Endothelial cell of umbilical vein (primary cell): ENCODE measurements at regions of chr12 and their contacts with region 1.

Region 1: GRCh38 chr12:91577586-91578539 is 395.2 kb upstream of the DCN start:
- DNase-seq: peak; percentile 61
- H3K4me3 ChIP-seq: peak overlapping the region in 1 of 3 experiments; percentile 73
- H3K27ac ChIP-seq: no peak overlapping the region
- H3K4me1 ChIP-seq: peaks cover 4% of the 10 kb centered on the region
- H3K27me3 ChIP-seq: no peaks in the 10 kb centered on the region
- CTCF ChIP-seq: peak; percentile 20 to 21
- POLR2A ChIP-seq: no peak

Region 2: DNA sequence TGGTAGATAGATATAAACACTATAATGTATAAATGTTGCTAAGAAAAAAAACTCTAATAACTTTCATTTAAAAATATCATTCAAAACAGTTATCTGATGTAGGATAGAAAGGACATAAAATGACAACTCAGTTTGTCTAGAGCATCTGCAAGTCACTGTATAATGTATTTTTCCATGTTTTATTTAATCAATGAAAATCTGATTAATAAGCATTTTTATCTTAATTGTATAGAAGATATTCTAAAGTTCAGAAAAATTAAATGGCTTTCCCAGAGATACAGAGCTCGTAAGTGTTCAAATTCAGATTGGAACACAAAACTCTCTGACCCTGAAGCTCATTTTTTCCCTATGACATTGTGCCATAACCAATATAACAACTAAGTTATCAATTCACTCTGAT is 99.4 kb before region 1 on chr12:
- CTCF ChIA-PET with region 1: no interaction called
- POLR2A ChIA-PET with region 1: no interaction called
- dilution Hi-C with region 1: no loop called
- intact Hi-C with region 1: no loop called
- DNase-seq: no peak
- H3K4me3 ChIP-seq: no peak overlapping the region
- H3K27ac ChIP-seq: no peak overlapping the region
- H3K4me1 ChIP-seq: no peaks in the 10 kb centered on the region
- H3K27me3 ChIP-seq: no peaks in the 10 kb centered on the region
- CTCF ChIP-seq: no peak
- POLR2A ChIP-seq: no peak

Region 3: GRCh38 chr12:91567100-91567485 is 10.8 kb before region 1 on chr12:
- CTCF ChIA-PET with region 1: interaction called, 17 read pairs
- POLR2A ChIA-PET with region 1: no interaction called
- dilution Hi-C with region 1: no loop called
- intact Hi-C with region 1: no loop called
- DNase-seq: no peak
- H3K4me3 ChIP-seq: no peak overlapping the region
- H3K27ac ChIP-seq: no peak overlapping the region
- H3K4me1 ChIP-seq: no peaks in the 10 kb centered on the region
- H3K27me3 ChIP-seq: no peaks in the 10 kb centered on the region
- CTCF ChIP-seq: no peak
- POLR2A ChIP-seq: no peak

Region 4: DNA sequence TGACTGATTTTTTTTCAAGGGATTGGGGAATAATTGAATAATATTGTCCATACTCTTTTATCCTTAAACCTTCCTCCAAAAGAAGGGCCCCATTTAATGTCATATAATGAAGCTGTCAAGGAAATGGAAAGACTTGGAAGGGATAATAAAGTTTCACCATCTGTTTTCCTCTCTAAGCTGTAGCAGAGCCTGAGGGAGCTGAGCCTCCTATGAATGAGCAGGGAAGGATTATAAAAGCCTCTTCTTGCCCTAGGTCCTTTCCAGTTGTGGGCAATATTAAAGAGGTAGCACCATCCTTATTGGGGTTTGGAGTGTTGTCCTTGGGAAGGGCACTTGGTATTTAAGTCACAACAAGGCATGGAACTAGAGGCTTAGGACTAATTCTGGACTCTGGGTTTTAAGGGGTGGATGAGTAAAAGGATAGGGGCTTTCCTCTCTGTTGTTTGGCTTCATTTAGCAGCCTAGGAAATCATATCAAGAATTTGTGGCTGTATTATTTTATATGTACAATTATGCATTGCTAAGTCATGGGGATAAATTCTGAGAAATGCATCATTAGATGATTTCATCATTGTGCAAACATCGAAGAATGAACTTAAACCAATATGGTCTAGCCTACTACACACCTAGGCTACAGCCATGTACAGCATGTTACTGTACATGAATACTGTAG is 13.2 kb after region 1 on chr12:
- CTCF ChIA-PET with region 1: interaction called, 15 read pairs
- POLR2A ChIA-PET with region 1: no interaction called
- dilution Hi-C with region 1: no loop called
- intact Hi-C with region 1: no loop called
- DNase-seq: no peak
- H3K4me3 ChIP-seq: no peak overlapping the region
- H3K27ac ChIP-seq: no peak overlapping the region
- H3K4me1 ChIP-seq: no peaks in the 10 kb centered on the region
- H3K27me3 ChIP-seq: no peaks in the 10 kb centered on the region
- CTCF ChIP-seq: no peak
- POLR2A ChIP-seq: no peak

Region 5: GRCh38 chr12:92065018-92065499 is 487.2 kb after region 1 on chr12:
- CTCF ChIA-PET with region 1: no interaction called
- POLR2A ChIA-PET with region 1: no interaction called
- dilution Hi-C with region 1: no loop called
- intact Hi-C with region 1: no loop called
- DNase-seq: no peak
- H3K4me3 ChIP-seq: no peak overlapping the region
- H3K27ac ChIP-seq: no peak overlapping the region
- H3K4me1 ChIP-seq: no peaks in the 10 kb centered on the region
- H3K27me3 ChIP-seq: no peaks in the 10 kb centered on the region
- CTCF ChIP-seq: no peak
- POLR2A ChIP-seq: no peak

Region 6: GRCh38 chr12:92408072-92408900 is 830.4 kb after region 1 on chr12:
- CTCF ChIA-PET with region 1: interaction called, 4 read pairs
- POLR2A ChIA-PET with region 1: no interaction called
- dilution Hi-C with region 1: no loop called
- intact Hi-C with region 1: loop called (anchors 2 kb)
- DNase-seq: peak; percentile 50
- H3K4me3 ChIP-seq: no peak overlapping the region
- H3K27ac ChIP-seq: no peak overlapping the region
- H3K4me1 ChIP-seq: peaks cover 16% of the 10 kb centered on the region
- H3K27me3 ChIP-seq: peaks cover 4 to 5% of the 10 kb centered on the region in 2 experiments
- CTCF ChIP-seq: peak; percentile 28 to 45
- POLR2A ChIP-seq: no peak

Region 7: DNA sequence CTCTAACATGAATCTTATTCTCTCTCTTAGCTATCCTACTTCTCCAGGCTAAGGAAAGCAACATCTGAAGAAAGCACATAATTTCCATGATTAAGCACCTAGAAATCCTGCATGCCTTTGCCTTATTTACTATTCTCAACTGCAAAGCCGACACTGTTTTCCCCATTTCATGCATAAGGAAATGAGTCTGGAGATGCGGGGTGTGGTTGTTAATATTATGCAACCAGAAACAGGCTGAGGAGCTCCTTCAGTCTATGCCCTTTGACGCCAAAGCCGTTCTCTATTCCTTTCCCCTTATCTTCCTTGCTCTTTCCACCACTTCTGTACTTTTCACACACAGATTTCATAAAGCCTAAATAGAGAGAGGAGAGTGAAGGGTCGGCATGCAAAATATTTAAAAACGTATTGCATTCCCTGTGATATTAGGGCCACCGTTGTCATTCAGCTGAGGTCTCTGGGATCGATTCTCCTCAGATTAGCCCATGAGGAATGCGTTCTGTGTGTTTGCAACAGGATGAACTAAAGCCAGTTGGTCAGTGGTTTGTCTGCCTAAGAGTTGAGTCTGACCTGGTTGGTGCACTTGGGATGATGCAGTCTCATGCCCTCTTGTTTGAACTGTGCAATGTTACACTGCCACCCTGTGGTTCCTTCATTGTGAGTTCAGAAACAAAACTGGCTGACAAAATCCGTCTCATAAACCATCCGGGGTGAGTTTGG is 1071.8 kb after region 1 on chr12:
- CTCF ChIA-PET with region 1: no interaction called
- POLR2A ChIA-PET with region 1: no interaction called
- dilution Hi-C with region 1: no loop called
- intact Hi-C with region 1: loop called (anchors 10 kb)
- DNase-seq: peak; percentile 75
- H3K4me3 ChIP-seq: no peak overlapping the region
- H3K27ac ChIP-seq: no peak overlapping the region
- H3K4me1 ChIP-seq: no peaks in the 10 kb centered on the region
- H3K27me3 ChIP-seq: no peaks in the 10 kb centered on the region
- CTCF ChIP-seq: peak; percentile 69 to 70
- POLR2A ChIP-seq: no peak